ENCODE measurements at regions of chr2 and their contacts with region 1.

Region 1: DNA sequence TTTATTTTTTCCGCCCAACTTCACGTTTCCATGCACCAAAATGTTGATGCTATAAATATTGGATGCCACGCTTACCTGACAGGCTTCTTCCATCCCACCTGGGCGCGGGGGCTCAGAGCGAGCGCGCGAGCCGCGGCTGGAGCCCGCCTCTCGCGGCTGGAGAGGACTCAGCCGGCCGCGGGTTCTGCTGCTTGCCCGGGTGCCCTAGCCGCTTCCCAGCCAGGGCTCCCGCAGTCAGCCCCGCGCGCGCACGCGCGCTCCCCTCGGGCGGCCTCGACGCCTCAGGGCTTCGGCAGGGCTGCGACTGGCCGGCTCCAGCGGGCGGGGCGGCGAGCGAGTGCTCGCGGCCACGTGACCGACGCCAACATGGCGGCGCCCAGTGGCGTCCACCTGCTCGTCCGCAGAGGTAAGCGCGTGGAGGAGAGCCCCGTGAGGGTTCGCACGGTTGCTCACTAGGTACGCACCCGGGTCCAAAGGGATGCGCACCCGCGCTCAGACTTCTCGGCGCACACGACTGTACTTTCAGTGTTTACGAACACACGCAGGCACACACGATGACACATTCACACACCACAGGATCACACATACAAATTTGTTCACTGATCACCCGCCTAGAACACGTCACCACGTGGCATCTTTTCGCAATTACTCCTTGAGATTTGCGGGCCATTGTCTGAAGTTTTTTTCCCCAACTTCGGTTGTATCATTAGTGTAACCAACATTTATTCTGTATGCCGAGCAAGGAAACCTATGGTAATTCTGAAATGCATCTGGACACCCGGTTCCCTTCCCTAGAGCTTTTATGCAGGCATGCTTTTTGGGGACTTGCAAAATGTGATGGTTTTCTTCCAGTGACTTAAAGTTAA is at the start of gene METAP1D:
- DNase-seq: peak; percentile 93
- ATAC-seq: peak; percentile 95
- H3K4me3 Mint-ChIP-seq: peak within 1 kb of the TSS; percentile 75
- H3K27ac Mint-ChIP-seq: peak within 1 kb of the TSS; percentile 87
- H3K4me1 Mint-ChIP-seq: peaks cover 18% of the 10 kb centered on the region
- H3K27me3 Mint-ChIP-seq: no peaks in the 10 kb centered on the region
- total RNA-seq, gene METAP1D: 5.3 to 6.0 TPM

Region 2: GRCh38 chr2:171893824-171894611 is 105.8 kb before region 1 on chr2 and contains the start of gene SLC25A12:
- CTCF ChIA-PET with region 1: no interaction called
- POLR2A ChIA-PET with region 1: no interaction called
- intact Hi-C with region 1: loop called (anchors 1 to 2 kb)
- DNase-seq: peak; percentile 88
- ATAC-seq: peak; percentile 98
- H3K4me3 Mint-ChIP-seq: peak within 1 kb of the TSS; percentile 100
- H3K27ac Mint-ChIP-seq: peak within 1 kb of the TSS; percentile 98
- H3K4me1 Mint-ChIP-seq: peaks cover 30% of the 10 kb centered on the region
- H3K27me3 Mint-ChIP-seq: no peaks in the 10 kb centered on the region
- total RNA-seq, gene SLC25A12: 19.5 to 22.4 TPM

Region 3: GRCh38 chr2:171922230-171923022 is 77.4 kb before region 1 on chr2 and contains the start of gene HAT1:
- CTCF ChIA-PET with region 1: no interaction called
- POLR2A ChIA-PET with region 1: no interaction called
- intact Hi-C with region 1: loop called (anchors 1 kb)
- DNase-seq: peak; percentile 99
- ATAC-seq: peak; percentile 96
- H3K4me3 Mint-ChIP-seq: peak within 1 kb of the TSS; percentile 94
- H3K27ac Mint-ChIP-seq: peak within 1 kb of the TSS; percentile 98
- H3K4me1 Mint-ChIP-seq: peaks cover 38% of the 10 kb centered on the region
- H3K27me3 Mint-ChIP-seq: no peaks in the 10 kb centered on the region
- total RNA-seq, gene HAT1: 88.5 to 92.6 TPM

Region 4: DNA sequence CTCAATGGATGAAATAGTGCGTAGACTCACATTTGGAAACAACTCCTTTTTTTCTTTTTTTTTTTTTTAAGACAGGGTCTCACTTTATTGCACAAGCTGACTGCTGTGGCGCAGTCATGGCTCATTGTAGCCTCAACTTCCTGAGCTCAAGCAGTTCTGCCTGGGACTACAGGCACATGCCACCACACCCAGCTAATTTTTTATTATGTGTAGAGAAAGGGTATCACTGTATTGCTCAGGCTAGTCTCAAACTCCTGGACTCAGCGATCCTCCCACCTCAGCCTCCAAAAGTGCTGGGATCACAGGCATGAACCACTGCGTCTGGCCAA is 60.1 kb before region 1 on chr2:
- CTCF ChIA-PET with region 1: no interaction called
- POLR2A ChIA-PET with region 1: no interaction called
- intact Hi-C with region 1: no loop called
- DNase-seq: no peak
- ATAC-seq: no peak
- H3K4me3 Mint-ChIP-seq: no peak overlapping the region
- H3K27ac Mint-ChIP-seq: no peak overlapping the region
- H3K4me1 Mint-ChIP-seq: peaks cover 27% of the 10 kb centered on the region
- H3K27me3 Mint-ChIP-seq: no peaks in the 10 kb centered on the region